ENCODE measurements at regions of chr9 and their contacts with region 1.

Region 1: GRCh38 chr9:137618105-137619067 is at the start of gene EHMT1:
- DNase-seq: peak; percentile 84 to 97 (median 94)
- H3K4me3 ChIP-seq: peak within 1 kb of the TSS; percentile 92 to 97
- H3K4me3 Mint-ChIP-seq: peak within 1 kb of the TSS; percentile 88 to 94 (median 91)
- H3K27ac ChIP-seq: peak within 1 kb of the TSS; percentile 88
- H3K27ac Mint-ChIP-seq: peak within 1 kb of the TSS; percentile 90 to 98 (median 96)
- H3K4me1 ChIP-seq: peaks cover 44% of the 10 kb centered on the region
- H3K4me1 Mint-ChIP-seq: peaks cover 26 to 52% (median 38%) of the 10 kb centered on the region in 4 donors
- H3K27me3 ChIP-seq: no peaks in the 10 kb centered on the region
- H3K27me3 Mint-ChIP-seq: no peaks in the 10 kb centered on the region
- total RNA-seq, gene EHMT1: 99.6 to 118 TPM

Region 2: GRCh38 chr9:136975644-136976043 is 642.7 kb before region 1 on chr9:
- CTCF ChIA-PET with region 1: no interaction called
- POLR2A ChIA-PET with region 1: no interaction called
- intact Hi-C with region 1: no loop called
- DNase-seq: peak in 1 of 5 donors; percentile 20
- H3K4me3 ChIP-seq: peak overlapping the region; percentile 23 to 24
- H3K4me3 Mint-ChIP-seq: peak overlapping the region; percentile 66 to 84 (median 77)
- H3K27ac ChIP-seq: peak overlapping the region; percentile 28
- H3K27ac Mint-ChIP-seq: peak overlapping the region; percentile 52 to 83 (median 72)
- H3K4me1 ChIP-seq: peaks cover 41% of the 10 kb centered on the region
- H3K4me1 Mint-ChIP-seq: peaks cover 11 to 32% (median 23%) of the 10 kb centered on the region in 4 donors
- H3K27me3 ChIP-seq: no peaks in the 10 kb centered on the region
- H3K27me3 Mint-ChIP-seq: no peaks in the 10 kb centered on the region

Region 3: DNA sequence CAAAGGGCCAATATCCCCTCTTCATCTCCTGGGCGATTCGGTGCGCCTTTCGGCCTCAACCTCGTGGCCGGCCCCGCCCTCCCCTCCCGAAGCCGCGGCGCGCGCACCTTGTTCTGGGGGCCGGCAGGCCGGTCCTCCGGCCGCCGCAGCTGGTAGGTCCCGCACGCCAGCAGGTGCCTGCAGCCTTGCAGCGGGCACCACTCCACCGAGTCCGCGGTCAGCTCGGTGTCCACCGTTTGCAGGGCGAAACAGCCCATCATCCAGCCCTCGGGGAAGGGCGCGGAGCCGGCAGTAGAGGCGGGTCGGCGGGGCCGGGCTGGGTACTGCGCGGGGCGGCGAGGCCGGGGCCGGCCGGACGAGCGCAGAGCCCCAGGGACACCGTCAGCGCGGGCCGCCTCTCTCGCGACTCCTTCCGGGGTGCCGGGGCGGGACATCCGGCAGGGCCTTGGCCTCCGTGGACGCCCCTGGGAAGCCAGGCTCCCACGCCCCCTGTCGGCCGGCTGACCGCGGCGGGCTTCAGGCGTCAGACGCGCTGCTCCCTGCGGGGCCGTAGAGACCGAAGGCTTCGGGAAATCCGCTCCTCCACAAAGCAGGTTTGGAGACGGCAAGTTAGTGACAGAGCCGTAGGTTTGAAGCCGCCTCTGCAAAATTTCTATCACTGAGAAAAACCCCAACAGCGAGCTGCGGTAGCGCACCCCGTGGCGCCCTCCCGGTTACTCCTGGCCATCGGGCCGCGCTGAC is 39.7 kb before region 1 on chr9 and contains the start of gene DPH7:
- CTCF ChIA-PET with region 1: no interaction called
- POLR2A ChIA-PET with region 1: interaction called, 26 read pairs
- intact Hi-C with region 1: no loop called
- DNase-seq: peak; percentile 91 to 93 (median 92)
- H3K4me3 ChIP-seq: peak within 1 kb of the TSS; percentile 47 to 86
- H3K4me3 Mint-ChIP-seq: peak within 1 kb of the TSS; percentile 78 to 87 (median 84)
- H3K27ac ChIP-seq: peak within 1 kb of the TSS; percentile 78
- H3K27ac Mint-ChIP-seq: peak within 1 kb of the TSS; percentile 22 to 85 (median 70)
- H3K4me1 ChIP-seq: peaks cover 37% of the 10 kb centered on the region
- H3K4me1 Mint-ChIP-seq: peaks cover 15 to 44% (median 27%) of the 10 kb centered on the region in 4 donors
- H3K27me3 ChIP-seq: no peaks in the 10 kb centered on the region
- H3K27me3 Mint-ChIP-seq: no peaks in the 10 kb centered on the region
- total RNA-seq, gene DPH7: 76.7 to 79.1 TPM

Region 4: GRCh38 chr9:137590462-137591383 is 27.7 kb before region 1 on chr9 and contains the start of gene ZMYND19:
- CTCF ChIA-PET with region 1: no interaction called
- POLR2A ChIA-PET with region 1: interaction called, 14 read pairs
- intact Hi-C with region 1: loop called (anchors 1 kb)
- DNase-seq: peak; percentile 85 to 93 (median 91)
- H3K4me3 ChIP-seq: peak within 1 kb of the TSS; percentile 23 to 52
- H3K4me3 Mint-ChIP-seq: peak within 1 kb of the TSS; percentile 92 to 100 (median 96)
- H3K27ac ChIP-seq: peak within 1 kb of the TSS; percentile 60
- H3K27ac Mint-ChIP-seq: peak within 1 kb of the TSS; percentile 89 to 97 (median 95)
- H3K4me1 ChIP-seq: peaks cover 21% of the 10 kb centered on the region
- H3K4me1 Mint-ChIP-seq: peaks cover 5 to 24% (median 15%) of the 10 kb centered on the region in 4 donors
- H3K27me3 ChIP-seq: no peaks in the 10 kb centered on the region
- H3K27me3 Mint-ChIP-seq: no peaks in the 10 kb centered on the region
- total RNA-seq, gene ZMYND19: 26.8 to 29.1 TPM

Region 5: GRCh38 chr9:137605121-137606004 is 13.0 kb before region 1 on chr9 and contains the start of gene ARRDC1:
- CTCF ChIA-PET with region 1: no interaction called
- POLR2A ChIA-PET with region 1: interaction called, 14 read pairs
- intact Hi-C with region 1: loop called (anchors 1 kb)
- DNase-seq: peak; percentile 85 to 94 (median 93)
- H3K4me3 ChIP-seq: peak within 1 kb of the TSS in 1 of 2 donors; percentile 63
- H3K4me3 Mint-ChIP-seq: peak within 1 kb of the TSS; percentile 80 to 88 (median 84)
- H3K27ac ChIP-seq: peak within 1 kb of the TSS; percentile 70
- H3K27ac Mint-ChIP-seq: peak within 1 kb of the TSS in 4 of 7 donors; percentile 52 to 75 (median 68)
- H3K4me1 ChIP-seq: peaks cover 15% of the 10 kb centered on the region
- H3K4me1 Mint-ChIP-seq: peaks cover 7 to 37% (median 20%) of the 10 kb centered on the region in 4 donors
- H3K27me3 ChIP-seq: no peaks in the 10 kb centered on the region
- H3K27me3 Mint-ChIP-seq: no peaks in the 10 kb centered on the region
- total RNA-seq, gene ARRDC1: 82.3 to 86.2 TPM

Region 6: DNA sequence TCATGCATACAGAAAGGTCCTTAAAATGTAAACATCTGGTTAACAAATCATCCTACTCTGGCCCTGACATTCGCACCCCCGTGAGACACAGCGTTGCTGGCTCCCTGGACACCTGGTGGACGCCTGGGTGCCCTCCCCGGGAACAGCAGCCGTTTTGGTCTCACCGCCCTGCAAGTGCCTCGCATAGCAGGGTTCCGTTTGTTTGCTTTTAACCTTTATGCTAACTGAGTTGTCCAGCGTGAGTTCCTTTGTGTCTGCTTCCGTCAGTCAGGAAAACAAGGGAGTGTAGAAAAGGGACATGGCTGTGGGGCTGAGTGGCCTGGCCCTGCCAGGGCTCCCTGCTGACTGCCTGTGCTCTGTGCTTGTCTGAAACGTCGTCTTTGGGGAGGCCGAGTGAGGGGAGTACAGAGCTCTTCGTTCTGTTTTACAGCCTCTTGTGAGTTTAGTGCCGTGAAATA is 167.3 kb after region 1 on chr9:
- CTCF ChIA-PET with region 1: no interaction called
- POLR2A ChIA-PET with region 1: no interaction called
- intact Hi-C with region 1: no loop called
- DNase-seq: no peak
- H3K4me3 ChIP-seq: no peak overlapping the region
- H3K4me3 Mint-ChIP-seq: no peak overlapping the region
- H3K27ac ChIP-seq: no peak overlapping the region
- H3K27ac Mint-ChIP-seq: peak overlapping the region in 1 of 7 donors; percentile 48
- H3K4me1 ChIP-seq: no peaks in the 10 kb centered on the region
- H3K4me1 Mint-ChIP-seq: peaks cover 4 to 18% (median 12%) of the 10 kb centered on the region in 4 donors
- H3K27me3 ChIP-seq: no peaks in the 10 kb centered on the region
- H3K27me3 Mint-ChIP-seq: no peaks in the 10 kb centered on the region